ENCODE measurements at regions of chr10 and their contacts with region 1.

Region 1: DNA sequence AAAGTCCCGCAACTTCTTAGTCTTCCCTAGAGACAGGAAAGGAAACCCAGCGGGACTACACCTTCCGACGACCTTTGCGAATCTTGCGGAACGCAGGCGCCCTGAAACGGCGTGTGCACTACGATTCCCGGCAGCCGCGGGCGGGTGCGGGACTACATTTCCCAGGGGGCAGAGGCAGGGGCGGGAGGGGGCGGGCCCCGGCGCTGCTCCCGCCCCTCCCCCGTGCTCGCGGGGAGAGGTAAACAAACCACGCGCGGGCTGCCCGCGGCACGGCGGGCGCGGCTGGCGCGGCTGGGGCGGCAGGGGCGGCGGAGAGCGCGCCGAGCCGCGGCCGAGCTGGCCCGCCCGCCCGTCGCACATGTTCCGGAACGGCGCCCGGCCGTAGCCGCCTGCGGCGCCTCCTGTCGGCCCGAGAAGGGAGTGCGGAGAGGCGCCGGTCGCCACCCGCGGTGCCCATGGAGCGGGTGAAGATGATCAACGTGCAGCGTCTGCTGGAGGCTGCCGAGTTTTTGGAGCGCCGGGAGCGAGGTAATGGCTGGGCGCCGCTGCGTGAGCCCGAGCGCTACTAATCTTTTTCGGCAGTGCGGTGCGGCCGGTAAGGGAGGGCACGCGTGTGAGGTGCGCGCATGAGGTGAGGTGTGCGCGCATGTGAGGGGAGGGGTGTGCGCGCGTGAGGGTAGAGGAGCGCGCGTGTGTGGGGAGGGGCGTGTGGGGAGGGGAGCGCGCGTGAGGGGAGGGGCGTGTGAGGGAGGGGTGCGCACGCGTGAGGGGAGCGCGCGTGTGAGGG is 18.5 kb downstream of the MXI1 start:
- DNase-seq: peak; percentile 93
- ATAC-seq: peak; percentile 74

Region 2: DNA sequence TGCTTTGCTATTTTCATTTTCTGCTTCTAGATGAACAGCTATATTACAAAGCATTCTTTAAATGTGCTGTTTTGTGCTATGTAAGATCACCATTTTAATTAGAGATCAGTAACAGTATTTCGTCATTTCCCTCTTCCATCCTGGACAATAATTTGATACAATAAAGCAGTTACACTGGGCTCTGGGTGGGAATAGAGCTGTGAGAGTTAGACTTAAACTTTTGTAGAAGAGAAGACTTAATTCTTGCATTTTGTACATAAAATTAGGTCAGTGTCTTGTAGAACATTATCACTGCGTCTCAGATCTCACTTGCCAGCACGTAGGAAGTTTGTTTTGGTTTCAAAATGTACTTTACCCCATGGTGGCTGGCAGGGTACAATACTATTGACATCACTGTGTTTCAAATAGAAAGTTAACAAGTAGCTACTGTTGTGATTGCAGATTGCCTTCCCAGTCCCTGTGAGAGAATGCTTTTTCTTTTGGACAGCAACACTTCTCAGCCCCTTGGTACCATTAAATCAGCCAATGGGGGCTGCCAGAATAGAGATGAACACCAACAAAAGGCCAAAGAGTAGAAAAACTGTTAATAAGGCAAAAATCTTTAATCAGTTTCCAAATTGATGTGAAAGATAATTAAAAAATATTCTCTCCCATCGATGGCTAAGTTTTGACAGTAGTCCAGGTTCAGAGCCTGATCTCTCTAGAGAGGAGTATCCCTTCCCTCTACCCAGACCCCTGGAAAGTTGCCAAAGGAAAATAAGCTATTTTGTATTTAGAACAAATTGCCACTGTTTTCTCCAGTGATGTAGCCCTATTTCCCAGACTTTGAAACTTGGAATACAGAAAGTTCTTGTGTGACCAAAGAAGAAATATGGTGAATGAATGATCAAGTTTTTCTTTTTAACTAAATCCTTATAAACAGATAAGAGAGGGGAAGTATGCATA is 43.7 kb after region 1 on chr10:
- intact Hi-C with region 1: loop called (anchors 5 kb)
- DNase-seq: no peak
- ATAC-seq: peak; percentile 89